PC-3 (cell line): ENCODE measurements at regions of chr7 and their contacts with region 1.

Region 1: GRCh38 chr7:151448261-151449252 is 8.6 kb upstream of the CRYGN start:
- DNase-seq: peak; percentile 66
- ATAC-seq: peak; percentile 88
- H3K4me3 ChIP-seq: peak overlapping the region; percentile 65
- H3K27ac ChIP-seq: no peak overlapping the region
- H3K4me1 ChIP-seq: no peaks in the 10 kb centered on the region
- H3K27me3 ChIP-seq: no peaks in the 10 kb centered on the region
- CTCF ChIP-seq: peak; percentile 75

Region 2: GRCh38 chr7:151315038-151315655 is 133.4 kb before region 1 on chr7:
- CTCF ChIA-PET with region 1: no interaction called
- POLR2A ChIA-PET with region 1: interaction called, 4 read pairs
- intact Hi-C with region 1: loop called (anchors 1 kb)
- DNase-seq: peak; percentile 82
- ATAC-seq: peak; percentile 82
- H3K4me3 ChIP-seq: no peak overlapping the region
- H3K27ac ChIP-seq: no peak overlapping the region
- H3K4me1 ChIP-seq: peaks cover 4% of the 10 kb centered on the region; the same call in 1 of the 2 replicates
- H3K27me3 ChIP-seq: no peaks in the 10 kb centered on the region
- CTCF ChIP-seq: peak; percentile 78

Region 3: DNA sequence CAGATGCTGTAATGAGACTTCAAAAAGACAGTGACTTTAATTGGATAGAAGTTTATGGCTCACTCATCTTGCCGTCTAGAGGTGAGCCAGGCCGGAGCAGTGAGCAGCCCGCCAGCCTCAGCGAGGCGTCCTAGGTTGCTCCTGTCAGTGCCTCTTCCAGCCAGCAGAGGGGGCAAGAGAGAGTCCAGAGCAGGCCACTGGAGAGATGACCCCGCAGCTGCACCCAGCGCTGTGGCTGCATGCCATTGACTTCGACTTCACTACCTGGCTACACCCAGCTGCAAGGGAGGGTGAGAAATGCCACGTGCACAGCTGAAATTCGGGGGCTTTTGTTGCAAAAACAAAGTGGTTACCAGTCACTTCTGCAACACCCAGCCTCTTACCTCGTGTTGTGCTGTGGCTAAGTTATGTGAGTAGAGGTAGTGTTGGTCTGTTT is 80.4 kb before region 1 on chr7:
- CTCF ChIA-PET with region 1: interaction called, 4 read pairs
- POLR2A ChIA-PET with region 1: no interaction called
- intact Hi-C with region 1: loop called (anchors 1 kb)
- DNase-seq: peak; percentile 75
- ATAC-seq: peak; percentile 99
- H3K4me3 ChIP-seq: no peak overlapping the region
- H3K27ac ChIP-seq: no peak overlapping the region
- H3K4me1 ChIP-seq: peaks cover 3% of the 10 kb centered on the region; the same call in 1 of the 2 replicates
- H3K27me3 ChIP-seq: no peaks in the 10 kb centered on the region
- CTCF ChIP-seq: peak; percentile 83